ENCODE measurements at regions of chr7 and their contacts with region 1.

Region 1: DNA sequence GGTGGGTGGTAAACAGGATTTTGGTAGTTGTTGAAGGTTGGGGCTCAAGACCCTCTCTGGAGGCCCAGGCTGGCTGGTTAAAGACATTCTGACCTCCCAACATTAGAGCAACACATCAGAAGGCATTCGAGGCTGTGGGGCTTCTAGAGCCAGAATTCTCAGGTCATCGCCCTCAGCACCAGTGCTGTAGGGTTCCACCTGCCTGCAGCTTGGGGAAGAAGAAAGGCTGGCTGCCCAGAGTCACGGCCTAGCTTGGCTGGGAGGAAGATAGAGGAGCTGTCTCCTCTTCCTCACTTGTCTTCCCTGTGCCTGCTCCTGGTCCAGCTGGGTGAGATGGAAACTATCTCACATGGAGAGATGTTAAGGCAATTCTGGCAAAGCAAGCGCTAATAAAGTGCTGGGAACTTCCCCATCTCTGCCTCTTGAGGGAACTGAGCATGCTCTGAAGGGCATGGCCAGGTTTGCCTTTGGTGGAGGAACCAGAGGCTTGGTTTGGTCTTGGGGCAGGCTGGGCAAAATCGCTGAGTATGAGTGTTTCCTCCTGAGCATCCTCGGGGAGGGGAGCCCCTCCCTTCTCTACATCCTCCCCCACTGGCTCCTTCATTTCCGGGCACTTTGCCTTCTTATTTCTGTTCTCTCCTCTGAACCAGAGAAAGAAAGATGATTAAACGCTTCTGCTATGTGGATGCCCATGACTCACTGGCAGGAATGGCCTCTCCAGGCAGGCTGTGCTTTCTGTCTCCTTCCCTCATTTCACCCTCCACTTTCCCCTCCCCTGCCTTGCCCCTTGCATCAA is 509.0 kb upstream of the PODXL start:
- DNase-seq: peak; percentile 68 to 93
- H3K4me3 ChIP-seq: no peak overlapping the region
- H3K27ac ChIP-seq: peak overlapping the region; percentile 81 to 87
- H3K4me1 ChIP-seq: peaks cover 9 to 24% of the 10 kb centered on the region in 2 donors
- H3K27me3 ChIP-seq: no peaks in the 10 kb centered on the region
- CTCF ChIP-seq: no peak

Region 2: DNA sequence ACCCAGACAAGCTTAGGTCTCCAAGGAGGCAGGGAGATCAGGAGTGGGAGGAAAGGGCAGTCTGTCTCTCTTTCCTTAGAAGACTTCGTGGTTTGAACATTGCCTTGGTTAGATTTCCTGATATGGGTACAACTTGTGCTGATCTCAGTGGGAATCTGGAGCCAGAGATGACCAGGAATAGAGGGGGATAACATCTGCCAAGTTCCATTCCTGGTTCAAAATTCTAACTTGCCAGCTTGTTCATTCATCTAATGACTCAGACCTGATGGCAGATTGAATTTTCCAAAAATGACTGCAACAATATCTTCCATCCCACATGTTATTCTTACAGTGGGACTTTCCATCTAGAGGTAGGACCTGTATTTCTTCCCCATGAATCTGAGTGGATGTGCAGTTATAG is 114.6 kb before region 1 on chr7:
- intact Hi-C with region 1: loop called (anchors 1 kb)
- DNase-seq: peak in 1 of 2 donors; percentile 73
- H3K4me3 ChIP-seq: no peak overlapping the region
- H3K27ac ChIP-seq: peak overlapping the region; percentile 83 to 87
- H3K4me1 ChIP-seq: peaks cover 16 to 39% of the 10 kb centered on the region in 2 donors
- H3K27me3 ChIP-seq: no peaks in the 10 kb centered on the region
- CTCF ChIP-seq: no peak

Region 3: DNA sequence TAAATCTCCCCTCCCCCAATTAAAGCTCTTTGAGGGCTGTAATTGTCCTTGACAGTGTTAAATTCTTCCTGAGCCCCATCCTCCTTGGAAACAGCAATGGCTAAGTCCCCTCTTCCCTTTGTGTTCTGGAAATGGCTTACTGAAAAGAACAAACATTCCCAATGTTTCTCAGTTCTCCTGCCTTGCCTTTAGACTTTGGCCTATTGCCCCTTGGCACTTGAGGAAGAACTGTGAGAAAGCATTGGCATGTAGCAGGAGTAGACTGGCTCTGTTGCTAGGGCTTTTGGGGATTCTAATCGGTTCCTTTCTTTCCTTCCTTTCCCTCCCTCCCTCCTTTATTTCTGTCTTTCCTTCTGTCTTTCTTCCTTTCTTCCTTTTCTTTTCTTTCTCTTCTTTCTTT is 45.7 kb before region 1 on chr7:
- intact Hi-C with region 1: loop called (anchors 5 kb)
- DNase-seq: no peak
- H3K4me3 ChIP-seq: no peak overlapping the region
- H3K27ac ChIP-seq: peak overlapping the region; percentile 12 to 54
- H3K4me1 ChIP-seq: peaks cover 0 to 6% of the 10 kb centered on the region in 2 donors
- H3K27me3 ChIP-seq: no peaks in the 10 kb centered on the region
- CTCF ChIP-seq: no peak

Region 4: GRCh38 chr7:132145466-132145865 is 80.1 kb after region 1 on chr7:
- intact Hi-C with region 1: loop called (anchors 2 kb)
- DNase-seq: peak; percentile 51 to 88
- H3K4me3 ChIP-seq: no peak overlapping the region
- H3K27ac ChIP-seq: peak overlapping the region; percentile 60 to 66
- H3K4me1 ChIP-seq: peaks cover 0 to 23% of the 10 kb centered on the region in 2 donors
- H3K27me3 ChIP-seq: no peaks in the 10 kb centered on the region
- CTCF ChIP-seq: peak in 2 of 3 experiments; percentile 8 to 30

Region 5: DNA sequence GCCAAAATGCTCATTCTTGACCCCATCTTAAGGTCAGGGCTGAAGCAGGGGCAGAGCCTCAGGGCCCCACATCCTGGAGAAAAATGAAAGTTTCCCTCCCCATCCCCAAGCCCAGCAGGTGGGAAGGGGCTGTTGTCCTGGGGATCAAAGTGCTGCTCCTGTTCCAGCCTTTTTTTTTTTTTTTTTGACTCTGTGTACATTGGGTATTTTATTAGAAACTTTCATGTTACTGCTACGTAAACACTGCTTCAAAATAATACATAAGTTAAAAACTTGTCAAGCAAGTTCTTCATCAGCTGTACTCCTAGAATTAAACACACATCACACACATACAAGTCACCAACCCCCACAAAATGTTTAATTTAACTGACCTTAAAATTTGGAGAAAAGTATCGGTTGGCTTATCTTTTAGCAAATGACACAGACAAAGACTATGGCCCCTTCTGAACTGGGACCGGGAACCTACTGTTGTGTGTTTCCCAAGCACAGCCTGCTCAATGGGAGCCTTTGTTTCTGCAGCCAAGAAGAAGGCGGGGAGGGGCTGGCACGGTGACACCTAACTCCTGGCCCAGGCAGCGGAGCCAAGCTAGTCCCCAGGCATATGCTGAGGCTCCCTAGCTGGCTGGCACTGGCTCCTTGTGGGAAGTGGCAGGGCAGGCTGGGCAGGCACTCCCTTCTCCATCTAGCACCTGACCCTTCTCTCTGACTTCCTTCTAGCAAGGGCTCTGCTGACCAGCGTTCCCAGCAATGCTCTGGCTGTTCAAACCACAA is 185.7 kb after region 1 on chr7:
- intact Hi-C with region 1: loop called (anchors 10 kb)
- DNase-seq: peak; percentile 38 to 82
- H3K4me3 ChIP-seq: no peak overlapping the region
- H3K27ac ChIP-seq: peak overlapping the region in 1 of 2 donors; percentile 6
- H3K4me1 ChIP-seq: peaks cover 3 to 19% of the 10 kb centered on the region in 2 donors
- H3K27me3 ChIP-seq: no peaks in the 10 kb centered on the region
- CTCF ChIP-seq: no peak